ENCODE measurements at regions of chr2 and their contacts with region 1.

Region 1: GRCh38 chr2:68121873-68122679 is 35.6 kb upstream of the PNO1 start:
- DNase-seq: peak; percentile 91
- ATAC-seq: peak; percentile 88
- H3K4me3 Mint-ChIP-seq: peak overlapping the region; percentile 35; the same call in 1 of the 2 replicates
- H3K27ac Mint-ChIP-seq: no peak overlapping the region
- H3K4me1 Mint-ChIP-seq: peaks cover 4% of the 10 kb centered on the region
- H3K27me3 Mint-ChIP-seq: no peaks in the 10 kb centered on the region
- CTCF ChIP-seq: peak; percentile 94

Region 2: DNA sequence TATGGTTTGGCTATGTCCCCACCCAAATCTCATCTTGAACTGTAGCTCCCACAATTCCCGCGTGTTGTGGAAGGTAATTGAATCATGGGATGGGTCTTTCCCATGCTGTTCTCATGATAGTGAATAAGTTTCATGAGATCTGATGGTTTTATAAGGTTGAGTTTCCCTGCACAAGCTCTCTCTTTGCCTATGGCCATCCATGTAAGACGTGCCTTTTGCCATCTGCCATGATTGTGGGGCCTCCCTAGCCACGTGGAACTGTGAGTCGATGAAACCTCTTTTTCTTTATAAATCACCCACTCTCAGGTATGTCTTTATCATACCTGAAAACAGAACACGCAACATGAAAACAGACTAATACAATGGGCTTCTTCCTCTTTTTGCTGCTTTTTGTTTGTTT is 48.0 kb before region 1 on chr2:
- CTCF ChIA-PET with region 1: no interaction called
- POLR2A ChIA-PET with region 1: no interaction called
- DNase-seq: no peak
- ATAC-seq: no peak
- H3K4me3 Mint-ChIP-seq: no peak overlapping the region
- H3K27ac Mint-ChIP-seq: no peak overlapping the region
- H3K4me1 Mint-ChIP-seq: no peaks in the 10 kb centered on the region
- H3K27me3 Mint-ChIP-seq: peaks cover 21% of the 10 kb centered on the region
- CTCF ChIP-seq: no peak

Region 3: DNA sequence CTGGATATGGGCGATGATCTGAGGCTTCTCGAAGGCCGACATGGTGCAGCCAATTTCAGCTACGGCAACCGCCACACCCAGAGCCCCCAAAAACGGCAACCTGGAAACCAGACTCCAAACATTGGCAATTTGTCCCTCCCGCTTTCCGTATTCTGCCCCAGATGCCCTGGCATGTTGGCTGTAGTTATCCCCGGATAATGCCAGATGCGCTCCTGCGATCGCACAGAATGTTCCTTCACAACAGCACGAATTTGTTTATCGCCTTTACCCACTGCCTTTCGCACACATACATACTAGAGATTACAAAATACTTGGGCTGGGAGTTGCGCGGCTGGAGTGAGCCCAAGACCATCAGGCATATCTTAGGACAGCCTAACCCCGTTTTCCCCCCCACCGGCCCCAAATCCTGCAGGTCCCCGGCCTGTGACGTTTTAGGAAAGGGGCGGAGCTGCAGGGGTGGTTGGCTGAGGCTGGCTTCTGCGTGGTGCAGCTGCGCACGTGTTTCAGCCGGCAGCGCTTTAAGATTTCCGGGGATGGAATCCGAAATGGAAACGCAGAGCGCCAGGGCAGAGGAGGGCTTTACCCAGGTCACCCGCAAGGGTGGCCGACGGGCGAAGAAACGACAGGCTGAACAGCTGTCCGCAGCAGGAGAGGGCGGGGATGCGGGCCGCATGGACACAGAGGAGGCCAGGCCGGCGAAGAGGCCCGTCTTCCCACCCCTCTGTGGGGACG is 35.5 kb after region 1 on chr2 and contains the start of gene PNO1:
- CTCF ChIA-PET with region 1: interaction called, 15 read pairs
- POLR2A ChIA-PET with region 1: no interaction called
- DNase-seq: peak; percentile 95
- ATAC-seq: peak; percentile 92
- H3K4me3 Mint-ChIP-seq: peak within 1 kb of the TSS; percentile 96
- H3K27ac Mint-ChIP-seq: peak within 1 kb of the TSS; percentile 100
- H3K4me1 Mint-ChIP-seq: peaks cover 17% of the 10 kb centered on the region
- H3K27me3 Mint-ChIP-seq: no peaks in the 10 kb centered on the region
- CTCF ChIP-seq: no peak
- total RNA-seq, gene PNO1: 23.2 to 25.5 TPM (median 24.0 TPM) in 3 replicates

Region 4: GRCh38 chr2:68256093-68256450 is 134.0 kb after region 1 on chr2:
- CTCF ChIA-PET with region 1: no interaction called
- POLR2A ChIA-PET with region 1: no interaction called
- DNase-seq: no peak
- ATAC-seq: no peak
- H3K4me3 Mint-ChIP-seq: no peak overlapping the region
- H3K27ac Mint-ChIP-seq: no peak overlapping the region
- H3K4me1 Mint-ChIP-seq: peaks cover 14% of the 10 kb centered on the region
- H3K27me3 Mint-ChIP-seq: no peaks in the 10 kb centered on the region
- CTCF ChIP-seq: no peak

Region 5: DNA sequence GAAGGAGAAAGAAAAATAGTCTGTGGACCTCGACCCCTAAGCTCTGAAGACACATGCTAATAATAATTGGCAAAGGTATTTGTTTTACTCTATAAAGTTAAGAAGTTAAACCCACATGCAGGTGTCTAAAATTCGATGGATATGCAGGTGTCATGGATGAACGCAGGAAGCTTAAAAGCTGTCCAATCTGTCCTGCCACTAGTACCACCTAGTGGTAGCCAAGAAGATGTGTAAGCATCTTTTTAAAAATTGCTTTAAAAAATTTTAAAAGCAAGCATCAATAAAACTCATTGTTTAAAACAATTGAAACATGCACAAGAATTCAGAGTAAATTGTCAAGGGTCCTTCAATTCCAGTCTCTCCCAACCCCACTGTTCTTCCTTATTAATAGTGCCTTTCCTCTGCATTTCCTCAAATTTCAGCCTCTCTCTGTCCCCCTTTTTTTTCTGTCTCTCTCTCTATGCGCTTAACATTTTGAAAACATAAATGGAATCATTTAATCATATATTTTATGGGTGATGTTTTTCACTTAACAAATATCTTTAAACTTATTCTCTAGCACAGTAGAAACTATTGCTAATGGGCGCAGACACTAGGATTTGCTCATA is 160.8 kb after region 1 on chr2:
- CTCF ChIA-PET with region 1: interaction called, 20 read pairs
- POLR2A ChIA-PET with region 1: no interaction called
- DNase-seq: no peak
- ATAC-seq: peak; percentile 52; the same call in 1 of the 2 replicates
- H3K4me3 Mint-ChIP-seq: no peak overlapping the region
- H3K27ac Mint-ChIP-seq: no peak overlapping the region
- H3K4me1 Mint-ChIP-seq: peaks cover 2% of the 10 kb centered on the region; the same call in 1 of the 2 replicates
- H3K27me3 Mint-ChIP-seq: peaks cover 4% of the 10 kb centered on the region
- CTCF ChIP-seq: peak; percentile 17; the same call in 1 of the 2 replicates

Region 6: GRCh38 chr2:68362069-68362468 is 240.0 kb after region 1 on chr2:
- CTCF ChIA-PET with region 1: interaction called, 11 read pairs
- POLR2A ChIA-PET with region 1: no interaction called
- DNase-seq: peak; percentile 65
- ATAC-seq: peak; percentile 54
- H3K4me3 Mint-ChIP-seq: no peak overlapping the region
- H3K27ac Mint-ChIP-seq: no peak overlapping the region
- H3K4me1 Mint-ChIP-seq: peaks cover 13% of the 10 kb centered on the region
- H3K27me3 Mint-ChIP-seq: peaks cover 29% of the 10 kb centered on the region
- CTCF ChIP-seq: peak; percentile 79

Region 7: GRCh38 chr2:68521037-68521436 is 399.0 kb after region 1 on chr2:
- CTCF ChIA-PET with region 1: no interaction called
- POLR2A ChIA-PET with region 1: interaction called, 10 read pairs
- DNase-seq: no peak
- ATAC-seq: no peak
- H3K4me3 Mint-ChIP-seq: no peak overlapping the region
- H3K27ac Mint-ChIP-seq: no peak overlapping the region
- H3K4me1 Mint-ChIP-seq: no peaks in the 10 kb centered on the region
- H3K27me3 Mint-ChIP-seq: no peaks in the 10 kb centered on the region
- CTCF ChIP-seq: no peak